ENCODE measurements at regions of chr2 and their contacts with region 1.

Region 1: DNA sequence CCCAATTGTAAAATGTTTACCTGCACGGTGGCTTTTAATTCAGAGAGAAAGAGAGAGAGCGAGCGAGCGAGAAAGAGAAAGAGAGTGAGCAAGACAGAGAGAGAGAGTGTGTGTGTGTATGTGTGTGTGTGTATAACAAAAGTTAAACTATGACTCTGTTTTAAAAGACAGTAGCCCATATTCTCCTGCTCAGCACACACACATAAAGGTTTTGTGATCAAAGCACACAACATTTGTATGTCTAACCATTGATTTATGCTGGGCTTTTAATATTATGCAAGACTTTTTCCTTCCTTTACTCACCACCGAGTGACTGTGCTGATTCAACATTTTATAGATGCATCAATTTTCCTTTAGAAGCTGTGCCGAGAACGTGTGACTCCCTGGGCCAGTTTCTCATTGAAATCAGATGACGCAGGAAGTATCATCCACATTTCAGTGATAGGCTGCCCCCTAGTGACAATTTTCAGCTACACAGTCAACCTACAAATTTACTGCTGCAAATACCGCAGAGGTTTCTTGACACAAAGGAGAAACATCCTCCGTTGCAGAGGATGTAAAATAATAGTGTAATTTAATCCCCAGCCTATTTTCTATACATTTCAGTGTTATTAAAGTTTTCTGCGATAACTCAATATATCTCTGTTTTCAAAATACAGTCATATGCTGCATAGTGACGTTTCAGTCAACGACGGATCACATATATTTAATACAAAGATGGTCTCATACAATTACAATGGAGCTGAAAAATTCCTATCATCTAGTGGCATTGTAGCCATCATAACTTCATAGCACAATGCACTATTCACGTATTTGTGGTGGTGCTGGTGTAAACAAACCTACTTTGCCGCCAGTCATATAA is 165.9 kb upstream of the TANK start:
- H3K4me3 ChIP-seq: no peak overlapping the region
- H3K27ac ChIP-seq: no peak overlapping the region
- H3K4me1 ChIP-seq: 0 out of 2 replicates have a peak, but pooled peaks cover 2% of the 10 kb centered on the region
- CTCF ChIP-seq: peak; percentile 71; the same call in 1 of the 2 replicates

Region 2: GRCh38 chr2:160087854-160088745 is 906.3 kb before region 1 on chr2:
- CTCF ChIA-PET with region 1: interaction called, 10 read pairs
- POLR2A ChIA-PET with region 1: no interaction called
- H3K4me3 ChIP-seq: no peak overlapping the region
- H3K27ac ChIP-seq: no peak overlapping the region
- H3K4me1 ChIP-seq: no peaks in the 10 kb centered on the region
- CTCF ChIP-seq: no peak

Region 3: GRCh38 chr2:160324161-160324800 is 670.1 kb before region 1 on chr2:
- CTCF ChIA-PET with region 1: interaction called, 14 read pairs
- POLR2A ChIA-PET with region 1: no interaction called
- H3K4me3 ChIP-seq: no peak overlapping the region
- H3K27ac ChIP-seq: no peak overlapping the region
- H3K4me1 ChIP-seq: peaks cover 9% of the 10 kb centered on the region
- CTCF ChIP-seq: no peak

Region 4: DNA sequence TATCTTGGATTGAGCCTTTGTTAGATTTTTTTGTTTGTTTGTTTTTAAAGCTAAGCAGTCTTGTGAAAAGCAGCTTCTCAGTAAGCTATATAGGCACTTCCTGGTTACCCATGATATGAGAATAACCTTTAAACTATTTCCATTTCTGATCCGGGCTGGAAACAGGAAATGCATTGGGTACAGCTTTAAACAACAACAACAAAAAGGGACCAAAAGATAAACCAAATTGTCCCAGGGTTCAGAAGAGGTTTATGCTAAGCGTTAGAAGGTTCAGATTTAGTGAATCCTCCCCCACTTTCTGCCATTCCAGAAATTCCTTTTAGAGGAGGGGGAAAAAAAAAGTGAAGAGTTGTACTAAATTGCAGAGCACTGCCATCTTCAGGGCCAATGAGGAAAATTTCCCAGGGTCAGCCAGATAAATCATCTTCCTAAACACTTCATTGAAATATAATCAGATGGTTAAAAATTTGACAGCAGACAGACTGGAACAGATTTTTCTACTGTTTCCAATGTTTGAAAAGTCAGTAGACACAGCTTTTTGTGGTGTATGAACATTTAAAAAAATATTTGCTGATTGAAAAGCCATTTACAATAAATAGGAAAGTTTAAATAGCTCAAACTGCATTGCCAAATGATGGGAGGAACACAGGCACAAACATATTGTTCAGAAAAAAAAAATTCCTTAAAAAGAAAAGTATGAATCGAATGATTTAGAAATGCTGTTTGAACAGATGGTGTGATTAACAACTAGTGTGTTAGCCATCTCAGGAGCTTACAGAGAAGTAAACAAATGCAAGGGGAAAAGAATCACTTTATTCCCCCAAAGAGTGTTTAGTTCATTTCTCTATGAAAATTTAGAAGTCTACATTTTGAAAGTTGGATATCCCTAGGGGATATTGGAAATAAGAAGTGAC is 24.1 kb before region 1 on chr2:
- CTCF ChIA-PET with region 1: interaction called, 16 read pairs
- POLR2A ChIA-PET with region 1: no interaction called
- H3K4me3 ChIP-seq: no peak overlapping the region
- H3K27ac ChIP-seq: no peak overlapping the region
- H3K4me1 ChIP-seq: no peaks in the 10 kb centered on the region
- CTCF ChIP-seq: peak; percentile 53; the same call in 1 of the 2 replicates

Region 5: GRCh38 chr2:161004379-161004778 is 10.0 kb after region 1 on chr2:
- CTCF ChIA-PET with region 1: interaction called, 12 read pairs
- POLR2A ChIA-PET with region 1: no interaction called
- H3K4me3 ChIP-seq: no peak overlapping the region
- H3K27ac ChIP-seq: no peak overlapping the region
- H3K4me1 ChIP-seq: no peaks in the 10 kb centered on the region
- CTCF ChIP-seq: no peak

Measured in HEK293 (cell line).